Dorsolateral prefrontal cortex (tissue), 120 donors: ENCODE measurements at regions of chr9 and their contacts with region 1.

Region 1: DNA sequence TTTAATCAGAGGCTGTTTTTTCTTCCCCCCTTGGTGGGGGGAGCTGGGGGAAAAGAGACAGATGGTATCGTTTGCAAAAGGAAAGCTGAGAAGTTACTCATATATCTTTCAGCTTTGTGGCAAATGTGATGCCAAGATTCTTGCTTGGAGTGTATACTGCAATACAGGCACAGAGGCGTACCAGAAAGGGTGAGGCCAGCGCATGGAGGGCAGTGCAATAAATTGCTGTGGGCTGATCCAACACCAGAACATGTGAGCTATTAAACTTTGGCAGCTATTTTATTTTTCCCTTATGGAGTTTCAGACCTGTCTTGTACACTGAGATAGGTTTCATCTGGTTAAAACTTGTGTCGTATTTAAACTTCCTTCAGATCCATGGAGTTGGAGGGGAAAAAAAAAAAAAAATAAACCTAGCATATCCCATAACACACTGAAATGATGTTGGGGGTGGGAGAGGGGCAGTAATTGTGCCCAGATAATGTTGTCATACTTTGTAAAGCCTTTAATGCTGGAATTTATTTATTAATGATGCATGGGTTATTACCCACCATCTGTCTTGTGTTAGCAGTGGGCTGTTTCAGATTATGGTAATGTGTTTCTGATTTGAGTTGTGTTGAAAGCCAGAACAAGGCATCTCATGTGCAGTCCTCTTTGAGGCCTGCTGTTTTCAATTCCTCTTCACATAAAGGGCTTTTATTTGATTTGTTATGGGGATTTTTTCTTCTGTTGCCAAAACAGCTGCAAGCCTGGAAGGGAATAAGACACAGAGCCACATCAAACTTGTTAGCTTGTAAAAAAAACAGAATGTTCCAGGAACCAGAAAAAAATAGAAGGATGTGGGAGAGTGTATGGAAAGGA is 891.3 kb downstream of the TLE1 start:
- DNase-seq: peak in 9 of 10 donors; percentile 22 to 67 (median 55)
- H3K4me3 ChIP-seq: peak overlapping the region in 5 of 59 donors; percentile 3 to 32 (median 9)
- H3K27ac ChIP-seq: peak overlapping the region in 54 of 59 donors; percentile 5 to 86 (median 68)
- H3K27me3 ChIP-seq: no peaks in the 10 kb centered on the region
- CTCF ChIP-seq: peak in 1 of 56 donors; percentile 9

Region 2: GRCh38 chr9:80417211-80417773 is 380.8 kb before region 1 on chr9:
- intact Hi-C with region 1: no loop called
- DNase-seq: no peak
- H3K4me3 ChIP-seq: no peak overlapping the region
- H3K27ac ChIP-seq: no peak overlapping the region
- H3K27me3 ChIP-seq: no peaks in the 10 kb centered on the region
- CTCF ChIP-seq: no peak

Region 3: GRCh38 chr9:80775530-80775929 is 22.5 kb before region 1 on chr9:
- intact Hi-C with region 1: no loop called
- DNase-seq: no peak
- H3K4me3 ChIP-seq: no peak overlapping the region
- H3K27ac ChIP-seq: no peak overlapping the region
- H3K27me3 ChIP-seq: no peaks in the 10 kb centered on the region
- CTCF ChIP-seq: no peak

Region 4: GRCh38 chr9:80932181-80932580 is 134.1 kb after region 1 on chr9:
- intact Hi-C with region 1: loop called in 1 of 2 experiments (anchors 2 kb)
- DNase-seq: no peak
- H3K4me3 ChIP-seq: no peak overlapping the region
- H3K27ac ChIP-seq: peak overlapping the region in 16 of 59 donors; percentile 4 to 77 (median 34)
- H3K27me3 ChIP-seq: no peaks in the 10 kb centered on the region
- CTCF ChIP-seq: no peak

Region 5: DNA sequence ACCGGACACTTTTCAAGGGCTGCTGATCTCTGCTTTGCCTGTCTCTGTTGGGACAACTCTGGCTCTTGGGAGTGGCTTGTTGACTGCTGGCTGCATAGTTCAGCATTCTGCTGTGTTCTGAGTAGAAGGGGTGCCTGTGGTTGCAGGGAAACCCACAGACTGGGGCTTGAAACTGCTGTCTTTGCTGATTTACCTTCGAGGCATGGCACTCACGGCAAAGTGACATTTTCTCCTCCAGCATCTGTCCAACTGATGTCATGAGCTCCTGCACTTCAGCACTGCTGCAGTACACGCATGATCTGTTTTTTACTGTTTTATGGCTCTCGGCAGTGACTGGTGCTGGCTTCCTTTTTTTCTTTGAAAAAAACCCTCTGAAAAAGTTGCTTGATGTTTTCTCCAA is 1259.7 kb after region 1 on chr9:
- intact Hi-C with region 1: no loop called
- DNase-seq: no peak
- H3K4me3 ChIP-seq: no peak overlapping the region
- H3K27ac ChIP-seq: no peak overlapping the region
- H3K27me3 ChIP-seq: no peaks in the 10 kb centered on the region
- CTCF ChIP-seq: no peak